ENCODE measurements at regions of chr9 and their contacts with region 1.

Region 1: DNA sequence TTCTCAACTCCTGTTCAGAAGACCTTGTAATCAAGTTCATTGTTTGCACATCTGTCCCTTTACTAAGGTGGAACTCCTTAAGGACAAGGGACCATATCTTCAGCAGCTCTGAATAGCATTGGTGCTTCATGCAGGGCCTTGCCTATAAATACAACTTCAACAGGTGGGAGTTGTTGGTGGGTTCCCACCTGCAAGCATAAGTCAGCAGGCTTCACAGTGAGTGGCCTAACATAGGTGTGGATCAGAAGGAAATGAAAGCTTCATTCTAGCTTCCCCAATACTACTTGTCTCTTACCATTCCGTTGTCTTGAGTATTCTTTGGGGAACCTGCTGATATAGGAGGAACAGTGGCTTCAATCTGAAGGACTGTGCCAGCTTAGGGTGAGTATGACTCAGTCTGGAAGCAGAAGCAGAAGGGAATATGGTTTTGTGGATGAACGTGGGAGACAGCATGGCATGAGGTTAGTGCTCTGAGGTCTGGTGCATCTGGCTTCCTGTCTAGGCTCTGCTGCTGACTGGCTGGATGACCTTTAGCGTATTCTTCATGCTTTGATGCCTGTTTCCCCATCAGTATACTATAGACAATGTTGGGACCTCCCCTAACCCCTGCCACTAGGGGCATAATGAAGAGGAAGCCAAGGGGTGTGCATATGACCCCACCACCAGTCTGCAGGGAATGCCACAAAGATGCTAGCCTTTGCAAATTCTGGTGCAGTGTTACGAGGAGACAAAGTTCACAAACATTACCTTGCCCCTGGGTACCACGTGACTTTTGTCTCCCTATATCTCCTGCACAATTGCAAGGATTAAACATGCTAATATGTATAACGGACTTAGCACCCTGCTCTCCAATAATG is 192.3 kb downstream of the PALM2AKAP2 start:
- DNase-seq: no peak
- ATAC-seq: peak; percentile 53
- H3K4me3 ChIP-seq: no peak overlapping the region
- H3K4me3 Mint-ChIP-seq: peak overlapping the region in 2 of 10 donors; percentile 13 to 29
- H3K27ac ChIP-seq: no peak overlapping the region
- H3K27ac Mint-ChIP-seq: peak overlapping the region in 7 of 9 donors; percentile 16 to 95 (median 69)
- H3K4me1 ChIP-seq: peaks cover 13 to 51% of the 10 kb centered on the region in 2 donors
- H3K4me1 Mint-ChIP-seq: peaks cover 37 to 89% (median 58%) of the 10 kb centered on the region in 7 donors
- H3K27me3 ChIP-seq: no peaks in the 10 kb centered on the region
- H3K27me3 Mint-ChIP-seq: no peaks in the 10 kb centered on the region

Region 2: GRCh38 chr9:109918339-109919163 is 53.7 kb before region 1 on chr9:
- CTCF ChIA-PET with region 1: no interaction called
- POLR2A ChIA-PET with region 1: interaction called, 9 read pairs
- intact Hi-C with region 1: loop called (anchors 1 to 5 kb)
- DNase-seq: peak in 6 of 9 donors; percentile 7 to 55 (median 18)
- ATAC-seq: no peak
- H3K4me3 ChIP-seq: peak overlapping the region; percentile 20
- H3K4me3 Mint-ChIP-seq: peak overlapping the region; percentile 37 to 88 (median 65)
- H3K27ac ChIP-seq: no peak overlapping the region
- H3K27ac Mint-ChIP-seq: peak overlapping the region; percentile 2 to 96 (median 60)
- H3K4me1 ChIP-seq: peaks cover 0 to 14% of the 10 kb centered on the region in 2 donors
- H3K4me1 Mint-ChIP-seq: peaks cover 9 to 56% (median 22%) of the 10 kb centered on the region in 7 donors
- H3K27me3 ChIP-seq: no peaks in the 10 kb centered on the region
- H3K27me3 Mint-ChIP-seq: peaks cover 0 to 5% (median 0%) of the 10 kb centered on the region in 5 donors

Region 3: GRCh38 chr9:109953813-109954497 is 18.3 kb before region 1 on chr9:
- CTCF ChIA-PET with region 1: interaction called, 4 read pairs
- POLR2A ChIA-PET with region 1: interaction called, 5 read pairs
- intact Hi-C with region 1: loop called (anchors 1 to 2 kb)
- DNase-seq: no peak
- ATAC-seq: no peak
- H3K4me3 ChIP-seq: no peak overlapping the region
- H3K4me3 Mint-ChIP-seq: no peak overlapping the region
- H3K27ac ChIP-seq: no peak overlapping the region
- H3K27ac Mint-ChIP-seq: no peak overlapping the region
- H3K4me1 ChIP-seq: no peaks in the 10 kb centered on the region
- H3K4me1 Mint-ChIP-seq: peaks cover 14 to 46% (median 28%) of the 10 kb centered on the region in 7 donors
- H3K27me3 ChIP-seq: no peaks in the 10 kb centered on the region
- H3K27me3 Mint-ChIP-seq: peaks cover 0 to 9% (median 5%) of the 10 kb centered on the region in 5 donors

Region 4: DNA sequence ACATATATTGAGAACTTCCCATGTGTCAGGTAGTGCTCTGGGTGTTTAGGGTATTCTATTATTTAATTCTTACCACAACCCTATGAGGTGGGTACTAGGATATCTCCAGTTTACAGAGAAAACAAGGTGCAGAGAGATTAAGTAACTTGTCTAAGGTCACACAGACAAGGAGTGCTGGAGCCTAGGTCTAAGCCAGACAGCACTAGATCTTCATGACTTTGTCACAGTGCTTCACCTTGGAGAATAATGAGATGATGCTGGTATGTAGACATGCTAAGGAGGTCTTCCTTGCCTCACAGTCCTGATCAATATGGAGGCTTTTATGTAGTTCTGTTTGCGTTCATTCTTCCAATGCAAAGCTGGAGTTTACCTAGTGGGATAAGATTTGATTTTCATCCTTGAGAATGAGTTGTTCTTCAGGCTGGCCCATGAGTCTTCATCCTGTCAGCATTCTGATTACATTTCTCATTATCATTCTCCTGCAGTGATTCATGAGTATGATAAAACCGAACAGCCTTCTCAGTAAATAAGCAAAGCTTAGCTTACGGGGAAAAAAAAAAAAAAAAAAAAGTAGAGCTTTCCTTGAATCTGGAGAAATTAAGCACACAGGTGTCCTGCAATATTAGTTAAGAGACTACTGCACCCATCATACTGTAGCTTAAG is 59.4 kb after region 1 on chr9:
- CTCF ChIA-PET with region 1: no interaction called
- POLR2A ChIA-PET with region 1: no interaction called
- intact Hi-C with region 1: loop called in 1 of 2 experiments (anchors 2 kb)
- DNase-seq: no peak
- ATAC-seq: no peak
- H3K4me3 ChIP-seq: no peak overlapping the region
- H3K4me3 Mint-ChIP-seq: no peak overlapping the region
- H3K27ac ChIP-seq: no peak overlapping the region
- H3K27ac Mint-ChIP-seq: peak overlapping the region in 2 of 9 donors; percentile 31 to 66
- H3K4me1 ChIP-seq: peaks cover 0 to 19% of the 10 kb centered on the region in 2 donors
- H3K4me1 Mint-ChIP-seq: peaks cover 15 to 31% (median 27%) of the 10 kb centered on the region in 7 donors
- H3K27me3 ChIP-seq: no peaks in the 10 kb centered on the region
- H3K27me3 Mint-ChIP-seq: peaks cover 0 to 4% (median 0%) of the 10 kb centered on the region in 5 donors

Region 5: GRCh38 chr9:110256380-110257096 is 284.3 kb after region 1 on chr9 and contains the start of gene TXN:
- CTCF ChIA-PET with region 1: no interaction called
- POLR2A ChIA-PET with region 1: no interaction called
- intact Hi-C with region 1: loop called in 1 of 2 experiments (anchors 5 kb)
- DNase-seq: peak; percentile 56 to 91 (median 74)
- ATAC-seq: peak; percentile 88
- H3K4me3 ChIP-seq: peak within 1 kb of the TSS; percentile 85
- H3K4me3 Mint-ChIP-seq: peak within 1 kb of the TSS; percentile 83 to 99 (median 96)
- H3K27ac ChIP-seq: peak within 1 kb of the TSS; percentile 65
- H3K27ac Mint-ChIP-seq: peak within 1 kb of the TSS; percentile 87 to 97 (median 89)
- H3K4me1 ChIP-seq: peaks cover 4 to 11% of the 10 kb centered on the region in 2 donors
- H3K4me1 Mint-ChIP-seq: peaks cover 16 to 52% (median 32%) of the 10 kb centered on the region in 7 donors
- H3K27me3 ChIP-seq: no peaks in the 10 kb centered on the region
- H3K27me3 Mint-ChIP-seq: peaks cover 0 to 5% (median 0%) of the 10 kb centered on the region in 5 donors
- total RNA-seq, gene TXN: 22.2 to 276 (median 24.9) TPM

Measured in naive thymus-derived CD4-positive, alpha-beta T cell (primary cell).